Heart left ventricle (tissue), 16 donors: ENCODE measurements at regions of chr2 and their contacts with region 1.

Region 1: DNA sequence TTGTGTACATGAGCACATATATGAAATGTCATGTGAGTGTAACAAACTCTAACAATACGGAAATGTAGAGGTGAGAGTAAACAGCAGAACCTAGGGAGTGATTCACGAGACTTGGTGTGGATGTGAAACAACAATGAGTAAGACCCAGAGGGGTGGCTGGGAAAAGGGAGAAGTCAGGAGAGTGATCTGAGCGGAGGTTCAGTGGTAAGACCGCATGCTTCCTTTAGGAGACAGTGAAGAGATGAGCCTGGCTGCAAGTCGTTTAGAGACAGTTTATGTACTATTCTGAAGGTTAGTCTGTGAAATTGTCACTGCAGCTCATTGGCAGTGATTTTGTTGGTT is 150.6 kb downstream of the PRPF40A start:
- DNase-seq: no peak
- ATAC-seq: peak in 1 of 4 donors; percentile 32
- H3K4me3 ChIP-seq: no peak overlapping the region
- H3K27ac ChIP-seq: no peak overlapping the region
- H3K4me1 ChIP-seq: peaks cover 0 to 17% (median 4%) of the 10 kb centered on the region in 12 donors
- H3K27me3 ChIP-seq: no peaks in the 10 kb centered on the region
- CTCF ChIP-seq: no peak
- POLR2A ChIP-seq: no peak

Region 2: GRCh38 chr2:152537081-152537651 is 29.5 kb before region 1 on chr2:
- intact Hi-C with region 1: no loop called
- DNase-seq: no peak
- ATAC-seq: peak in 1 of 4 donors; percentile 50
- H3K4me3 ChIP-seq: no peak overlapping the region
- H3K27ac ChIP-seq: no peak overlapping the region
- H3K4me1 ChIP-seq: peaks cover 0 to 27% (median 1%) of the 10 kb centered on the region in 12 donors
- H3K27me3 ChIP-seq: no peaks in the 10 kb centered on the region
- CTCF ChIP-seq: no peak
- POLR2A ChIP-seq: no peak

Region 3: DNA sequence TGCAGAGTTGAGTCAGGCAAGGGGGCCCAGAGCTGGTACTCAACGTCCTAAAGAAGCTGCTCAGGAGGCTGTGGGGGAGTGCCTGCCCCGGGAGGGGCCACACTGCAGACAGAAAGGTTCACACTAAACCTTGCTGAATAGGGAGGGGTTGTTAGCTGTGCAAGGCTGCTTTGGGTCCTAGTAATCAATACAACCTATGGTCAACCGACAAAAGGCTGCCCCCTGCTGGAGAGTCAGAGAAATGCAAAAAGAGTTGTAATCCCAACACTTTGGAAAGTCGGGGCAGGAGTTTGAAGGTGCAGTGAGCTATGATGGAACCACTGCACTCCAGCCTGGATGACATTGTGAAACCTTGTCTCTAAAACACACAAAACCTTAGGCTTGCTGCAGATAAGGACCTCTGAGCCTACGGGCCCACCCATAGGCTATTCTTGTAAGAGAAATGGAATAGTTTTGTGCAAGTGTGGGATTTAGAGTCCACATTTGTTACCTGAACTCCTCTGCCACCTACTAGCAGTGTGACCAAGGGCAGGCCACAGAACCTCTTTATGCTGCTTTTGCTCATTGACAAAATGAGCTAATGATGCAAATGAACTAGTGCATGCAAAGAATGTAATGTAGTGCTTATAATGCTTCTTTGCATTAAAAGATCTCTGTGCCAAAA is 69.1 kb after region 1 on chr2:
- intact Hi-C with region 1: loop called in 1 of 10 experiments (anchors 5 kb)
- DNase-seq: peak in 3 of 5 donors; percentile 39 to 54 (median 41)
- ATAC-seq: peak in 3 of 4 donors; percentile 55 to 63 (median 63)
- H3K4me3 ChIP-seq: no peak overlapping the region
- H3K27ac ChIP-seq: no peak overlapping the region
- H3K4me1 ChIP-seq: peaks cover 0 to 7% (median 0%) of the 10 kb centered on the region in 12 donors
- H3K27me3 ChIP-seq: no peaks in the 10 kb centered on the region
- CTCF ChIP-seq: peak; percentile 70 to 89 (median 80)
- POLR2A ChIP-seq: no peak